OCI-LY7 (cell line): ENCODE measurements at regions of chr1 and their contacts with region 1.

Region 1: DNA sequence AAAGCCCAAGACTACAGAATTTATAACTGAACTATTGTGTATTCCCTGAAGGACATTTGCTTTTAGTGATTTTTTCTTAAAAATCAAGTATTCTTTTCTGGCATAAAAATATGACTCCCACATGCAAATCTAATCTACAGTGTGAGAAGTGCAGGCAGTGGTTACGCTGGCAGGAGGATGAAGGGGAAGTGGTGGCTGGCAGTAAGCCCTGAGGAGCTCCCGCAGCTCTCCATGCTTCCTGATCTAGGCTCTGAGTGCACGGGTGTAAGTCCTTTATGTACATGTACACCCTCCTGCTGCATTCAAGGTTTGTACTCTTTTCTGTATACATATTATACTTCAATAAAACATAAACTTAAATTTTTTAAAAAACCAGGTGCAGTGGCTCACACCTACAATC is 67.5 kb upstream of the PRDX6 start:
- DNase-seq: peak; percentile 76
- H3K4me3 ChIP-seq: peak overlapping the region; percentile 41
- H3K27ac ChIP-seq: peak overlapping the region; percentile 96
- H3K4me1 ChIP-seq: peaks cover 100% of the 10 kb centered on the region
- CTCF ChIP-seq: no peak

Region 2: DNA sequence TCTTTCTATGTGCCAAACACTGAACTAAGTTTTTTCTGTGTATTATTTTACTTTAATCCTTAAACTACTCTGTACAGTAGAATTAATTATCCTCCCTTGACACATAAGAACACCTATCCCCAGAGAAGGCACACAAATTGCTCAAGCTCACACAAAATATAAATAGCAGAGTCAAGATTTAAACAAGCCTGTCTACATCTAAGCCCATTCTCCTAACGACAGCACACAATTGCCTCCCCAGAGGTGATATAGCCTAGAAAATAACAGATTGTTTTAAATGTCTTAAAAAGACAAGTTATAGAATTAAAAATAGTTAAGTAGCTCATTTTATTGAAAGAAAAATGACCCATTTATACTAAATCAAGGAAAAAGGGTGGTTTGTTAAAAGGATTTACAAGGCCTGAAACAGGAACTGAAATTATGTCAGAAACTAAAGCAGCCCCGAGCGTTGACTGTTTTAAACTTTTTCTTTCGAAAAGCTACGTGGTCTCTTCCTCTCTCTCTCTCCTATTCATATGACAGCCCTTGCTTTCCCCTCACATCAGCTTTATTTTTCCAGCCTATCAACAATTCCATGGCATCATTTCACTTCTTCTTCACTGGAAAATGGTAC is 389.4 kb before region 1 on chr1:
- CTCF ChIA-PET with region 1: interaction called, 3 read pairs
- POLR2A ChIA-PET with region 1: interaction called, 3 read pairs
- intact Hi-C with region 1: loop called (anchors 10 kb)
- DNase-seq: peak; percentile 86
- H3K4me3 ChIP-seq: peak overlapping the region; percentile 33
- H3K27ac ChIP-seq: peak overlapping the region; percentile 84
- H3K4me1 ChIP-seq: peaks cover 54% of the 10 kb centered on the region
- CTCF ChIP-seq: no peak

Region 3: DNA sequence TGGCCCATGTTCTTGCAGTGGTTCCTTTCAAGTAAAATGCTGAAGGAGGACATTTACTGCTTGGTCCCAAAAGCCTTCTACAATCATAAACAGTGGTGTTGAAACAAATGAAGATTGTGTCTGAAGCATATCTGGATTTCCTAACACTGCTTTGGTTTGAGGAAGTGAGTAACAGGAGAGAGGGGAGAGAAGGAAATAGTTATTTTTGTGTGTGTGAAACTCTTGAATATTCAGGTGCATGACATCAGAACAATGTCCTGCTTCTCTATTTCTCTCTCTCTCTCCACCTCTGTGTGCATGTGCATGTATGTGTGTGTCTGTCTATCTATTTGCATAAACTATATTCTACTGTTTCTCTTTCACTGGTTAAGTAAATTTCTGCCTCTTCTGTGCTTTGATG is 297.5 kb before region 1 on chr1:
- CTCF ChIA-PET with region 1: no interaction called
- POLR2A ChIA-PET with region 1: no interaction called
- intact Hi-C with region 1: loop called (anchors 10 kb)
- DNase-seq: peak; percentile 78
- H3K4me3 ChIP-seq: no peak overlapping the region
- H3K27ac ChIP-seq: peak overlapping the region; percentile 29
- H3K4me1 ChIP-seq: peaks cover 28% of the 10 kb centered on the region
- CTCF ChIP-seq: no peak

Region 4: GRCh38 chr1:173314656-173315055 is 95.0 kb before region 1 on chr1:
- CTCF ChIA-PET with region 1: no interaction called
- POLR2A ChIA-PET with region 1: no interaction called
- intact Hi-C with region 1: no loop called
- DNase-seq: no peak
- H3K4me3 ChIP-seq: no peak overlapping the region
- H3K27ac ChIP-seq: no peak overlapping the region
- H3K4me1 ChIP-seq: no peaks in the 10 kb centered on the region
- CTCF ChIP-seq: no peak

Region 5: GRCh38 chr1:173467426-173467825 is 57.8 kb after region 1 on chr1:
- CTCF ChIA-PET with region 1: no interaction called
- POLR2A ChIA-PET with region 1: no interaction called
- intact Hi-C with region 1: no loop called
- DNase-seq: no peak
- H3K4me3 ChIP-seq: no peak overlapping the region
- H3K27ac ChIP-seq: no peak overlapping the region
- H3K4me1 ChIP-seq: no peaks in the 10 kb centered on the region
- CTCF ChIP-seq: no peak

Region 6: DNA sequence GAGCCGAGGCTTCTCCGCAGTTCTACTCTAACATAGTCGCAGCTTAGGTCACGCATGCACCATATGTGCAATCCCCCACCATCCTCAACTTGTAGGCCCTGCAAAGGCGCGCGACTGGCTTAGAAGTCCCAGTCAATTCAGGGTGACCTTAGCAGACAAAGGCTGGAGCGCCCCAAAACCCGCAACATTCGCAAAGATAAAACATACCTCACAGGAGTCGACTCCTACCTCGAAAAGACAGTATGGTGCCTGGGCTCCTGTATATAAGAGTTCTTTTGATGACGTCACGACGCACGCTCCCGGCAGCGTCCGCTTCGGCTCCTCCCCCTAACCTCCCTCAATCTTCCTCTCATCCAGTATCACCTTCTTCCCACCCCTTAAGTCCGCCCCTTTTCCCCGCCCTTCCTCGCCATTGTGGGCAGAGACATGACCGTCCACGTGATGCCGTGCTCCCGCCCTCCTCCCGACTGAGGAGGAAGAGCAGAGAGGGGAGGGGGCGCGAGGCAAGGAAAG is 458.2 kb after region 1 on chr1 and contains the start of gene GAS5:
- CTCF ChIA-PET with region 1: no interaction called
- POLR2A ChIA-PET with region 1: interaction called, 3 read pairs
- intact Hi-C with region 1: loop called (anchors 2 kb)
- DNase-seq: peak; percentile 99
- H3K4me3 ChIP-seq: peak within 1 kb of the TSS; percentile 98
- H3K27ac ChIP-seq: peak within 1 kb of the TSS; percentile 91
- H3K4me1 ChIP-seq: peaks cover 61% of the 10 kb centered on the region
- CTCF ChIP-seq: no peak
- total RNA-seq, gene GAS5: 899 and 1,026 TPM in 2 replicates

Region 7: GRCh38 chr1:174276087-174276486 is 866.5 kb after region 1 on chr1:
- CTCF ChIA-PET with region 1: no interaction called
- POLR2A ChIA-PET with region 1: no interaction called
- intact Hi-C with region 1: loop called (anchors 5 kb)
- DNase-seq: peak; percentile 95
- H3K4me3 ChIP-seq: peak overlapping the region; percentile 43
- H3K27ac ChIP-seq: peak overlapping the region; percentile 96
- H3K4me1 ChIP-seq: peaks cover 91% of the 10 kb centered on the region
- CTCF ChIP-seq: no peak